ENCODE measurements at regions of chr1 and their contacts with region 1.

Region 1: DNA sequence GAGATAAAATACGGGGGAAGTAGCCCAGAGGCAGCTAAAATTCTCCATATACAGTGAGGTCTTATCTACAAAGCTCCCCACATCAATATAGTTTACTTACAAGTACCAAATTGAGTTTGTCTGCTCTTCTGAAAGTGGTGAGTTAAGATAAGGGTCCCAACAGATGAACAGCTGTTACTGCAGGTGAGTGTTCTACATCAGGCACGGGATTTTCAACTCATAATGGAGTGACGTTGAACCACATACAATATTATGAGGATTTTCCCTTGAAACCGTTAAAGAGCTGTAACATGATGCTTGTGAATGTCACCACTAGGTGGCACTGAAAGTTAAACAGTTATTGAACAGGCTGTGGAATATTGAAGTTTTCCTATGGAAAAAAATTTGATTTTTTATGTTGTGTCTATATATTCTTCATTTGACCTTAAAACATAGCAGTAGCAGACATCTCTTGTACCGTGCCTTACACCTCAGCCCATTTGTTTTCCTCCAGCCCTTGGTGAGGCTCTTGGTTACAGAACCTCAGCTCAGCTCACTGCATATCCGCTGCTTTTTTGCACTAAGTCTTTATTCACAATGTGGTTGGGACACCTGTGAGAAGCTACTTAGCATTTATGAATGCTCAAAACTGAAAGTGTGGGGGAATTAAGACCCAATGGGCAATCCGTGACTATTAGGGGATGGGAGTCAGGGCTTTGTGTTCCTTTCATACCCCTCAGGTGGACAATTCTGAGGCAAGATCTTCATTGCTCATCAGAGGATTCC is 23.2 kb downstream of the CD1D start:
- DNase-seq: no peak
- H3K4me3 ChIP-seq: no peak overlapping the region
- H3K27ac ChIP-seq: no peak overlapping the region
- H3K4me1 ChIP-seq: no peaks in the 10 kb centered on the region
- H3K27me3 ChIP-seq: no peaks in the 10 kb centered on the region
- CTCF ChIP-seq: peak; percentile 18 to 80 (median 61)
- POLR2A ChIP-seq: no peak

Region 2: DNA sequence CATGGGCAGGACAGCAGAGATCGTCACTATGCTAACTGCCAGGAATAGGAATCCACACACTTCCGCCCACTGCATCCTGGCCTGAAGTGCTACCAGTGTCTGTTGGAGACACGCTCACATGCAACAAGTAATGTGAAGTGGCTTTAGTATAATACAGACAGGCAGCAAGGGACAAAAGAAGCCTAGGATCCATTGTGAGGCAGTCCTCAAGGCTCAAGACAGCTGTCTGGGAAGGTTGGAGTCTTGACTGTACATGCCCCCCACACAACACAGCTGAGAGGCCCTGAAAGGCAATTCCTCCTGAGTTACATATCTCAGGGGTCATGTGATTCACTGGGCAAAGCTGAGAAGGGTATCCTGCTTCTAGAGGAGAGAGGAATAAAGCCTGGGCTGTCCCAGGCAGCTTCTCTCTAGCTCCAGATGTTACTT is 63.1 kb before region 1 on chr1:
- intact Hi-C with region 1: no loop called
- DNase-seq: no peak
- H3K4me3 ChIP-seq: no peak overlapping the region
- H3K27ac ChIP-seq: no peak overlapping the region
- H3K4me1 ChIP-seq: no peaks in the 10 kb centered on the region
- H3K27me3 ChIP-seq: no peaks in the 10 kb centered on the region
- CTCF ChIP-seq: no peak
- POLR2A ChIP-seq: no peak

Region 3: GRCh38 chr1:159071970-159072582 is 868.2 kb after region 1 on chr1:
- intact Hi-C with region 1: loop called (anchors 10 kb)
- DNase-seq: no peak
- H3K4me3 ChIP-seq: no peak overlapping the region
- H3K27ac ChIP-seq: no peak overlapping the region
- H3K4me1 ChIP-seq: no peaks in the 10 kb centered on the region
- H3K27me3 ChIP-seq: no peaks in the 10 kb centered on the region
- CTCF ChIP-seq: peak in 5 of 6 experiments; percentile 25 to 68 (median 38)
- POLR2A ChIP-seq: no peak

Measured in thyroid gland (tissue), 4 donors.